Dorsolateral prefrontal cortex (tissue), 120 donors: ENCODE measurements at regions of chr1 and their contacts with region 1.

Region 1: DNA sequence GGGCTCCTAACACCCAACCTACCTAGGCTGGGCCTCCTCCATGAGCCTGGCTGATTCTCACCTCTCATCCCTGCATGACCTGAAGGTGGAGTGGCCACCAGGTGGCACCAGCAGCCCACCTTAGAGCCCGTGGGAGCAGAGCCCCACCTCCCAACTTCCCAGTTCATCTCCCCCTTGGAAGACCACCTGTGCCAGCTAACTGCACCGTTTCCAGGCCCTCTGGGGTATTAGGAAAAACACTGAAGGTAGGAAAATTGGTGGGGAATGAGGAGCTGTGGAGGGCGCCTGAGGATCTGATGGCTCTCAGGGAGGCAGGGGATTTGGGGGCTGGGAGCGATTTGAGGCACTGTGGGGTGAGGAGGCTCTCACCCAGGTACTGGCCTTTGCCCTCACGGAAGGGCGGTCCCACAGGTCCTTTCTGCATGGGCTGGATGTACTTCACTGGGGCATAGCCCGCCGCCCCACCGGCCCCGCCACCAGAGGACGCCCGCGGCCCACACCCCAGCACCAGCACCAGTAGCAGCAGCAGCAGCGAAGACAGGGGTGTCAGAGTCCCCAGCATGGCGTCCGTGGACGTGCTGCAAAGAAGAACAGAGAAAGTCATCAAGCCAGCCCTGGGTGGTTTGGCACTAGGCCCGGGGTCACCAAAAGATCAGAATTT is 11.1 kb downstream of the ADPRS start:
- DNase-seq: peak in 9 of 10 donors; percentile 68 to 83 (median 75)
- H3K4me3 ChIP-seq: peak overlapping the region in 5 of 59 donors; percentile 3 to 26 (median 12)
- H3K27ac ChIP-seq: peak overlapping the region in 9 of 59 donors; percentile 10 to 92 (median 62)
- H3K27me3 ChIP-seq: no peaks in the 10 kb centered on the region
- CTCF ChIP-seq: peak; percentile 70 to 95 (median 88)

Region 2: DNA sequence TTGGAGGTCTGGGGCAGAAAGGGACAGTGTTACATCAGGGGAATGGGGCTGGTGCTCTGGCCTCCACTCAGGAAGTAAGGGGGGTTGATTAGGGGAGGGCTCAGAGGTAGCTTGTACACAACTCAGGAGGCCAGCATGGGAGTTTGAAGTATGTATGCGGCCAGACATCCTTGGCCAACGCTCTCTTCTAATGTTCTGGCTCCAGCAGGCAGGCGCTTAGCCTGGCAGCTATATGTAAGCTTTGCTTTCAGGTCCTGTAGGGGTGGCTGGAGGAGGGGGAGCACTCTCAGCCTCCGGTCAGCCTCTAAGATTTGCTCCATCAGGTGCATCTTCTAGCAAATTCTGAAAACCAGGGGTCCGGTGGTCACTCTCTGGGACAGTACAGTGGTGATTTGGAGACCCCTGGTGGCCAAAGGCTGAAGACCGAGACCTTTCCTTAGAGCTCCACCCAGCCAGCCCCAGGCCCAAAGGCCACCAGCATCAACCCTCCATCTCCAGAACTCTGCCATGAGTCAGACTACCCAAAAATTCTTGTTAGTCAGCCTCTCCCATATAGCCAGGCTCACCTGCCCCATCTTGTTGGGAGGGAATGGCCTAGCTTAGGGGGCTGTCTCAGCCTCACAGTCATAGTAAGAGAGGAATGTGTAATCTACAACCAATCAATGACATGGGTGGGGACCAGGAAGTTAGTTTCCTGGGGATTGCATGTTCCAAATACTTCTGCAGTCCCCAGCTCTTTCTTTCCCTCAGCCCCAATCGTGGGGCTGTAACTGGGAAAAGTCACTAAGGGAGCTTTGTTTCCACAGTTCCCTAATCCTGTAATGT is 34.9 kb after region 1 on chr1:
- intact Hi-C with region 1: loop called (anchors 1 to 5 kb)
- DNase-seq: peak in 4 of 10 donors; percentile 41 to 64 (median 58)
- H3K4me3 ChIP-seq: no peak overlapping the region
- H3K27ac ChIP-seq: peak overlapping the region in 32 of 59 donors; percentile 5 to 73 (median 42)
- H3K27me3 ChIP-seq: no peaks in the 10 kb centered on the region
- CTCF ChIP-seq: peak; percentile 46 to 88 (median 75)

Region 3: DNA sequence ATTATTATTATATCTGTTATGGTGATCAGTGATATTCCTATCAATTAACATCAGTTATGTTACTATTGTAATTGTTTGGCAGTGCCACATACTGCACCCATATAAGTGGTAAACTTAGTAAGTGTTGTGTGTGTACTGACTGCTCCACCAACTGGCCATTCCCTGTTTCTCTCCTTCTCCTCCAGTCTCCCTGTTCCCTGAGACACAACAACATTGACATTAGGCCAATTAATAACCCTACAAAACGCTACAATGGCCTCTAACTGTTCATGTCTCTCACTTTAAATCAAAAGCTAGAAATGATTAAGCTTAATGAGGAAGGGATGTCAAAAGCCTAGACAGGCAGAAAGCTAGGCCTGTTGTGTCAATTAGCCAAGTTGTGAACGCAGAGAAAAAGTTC is 117.9 kb after region 1 on chr1:
- intact Hi-C with region 1: loop called in 1 of 2 experiments (anchors 5 kb)
- DNase-seq: peak in 3 of 10 donors; percentile 41 to 52 (median 41)
- H3K4me3 ChIP-seq: no peak overlapping the region
- H3K27ac ChIP-seq: peak overlapping the region in 37 of 59 donors; percentile 9 to 79 (median 55)
- H3K27me3 ChIP-seq: no peaks in the 10 kb centered on the region
- CTCF ChIP-seq: peak in 52 of 56 donors; percentile 23 to 76 (median 54)

Region 4: DNA sequence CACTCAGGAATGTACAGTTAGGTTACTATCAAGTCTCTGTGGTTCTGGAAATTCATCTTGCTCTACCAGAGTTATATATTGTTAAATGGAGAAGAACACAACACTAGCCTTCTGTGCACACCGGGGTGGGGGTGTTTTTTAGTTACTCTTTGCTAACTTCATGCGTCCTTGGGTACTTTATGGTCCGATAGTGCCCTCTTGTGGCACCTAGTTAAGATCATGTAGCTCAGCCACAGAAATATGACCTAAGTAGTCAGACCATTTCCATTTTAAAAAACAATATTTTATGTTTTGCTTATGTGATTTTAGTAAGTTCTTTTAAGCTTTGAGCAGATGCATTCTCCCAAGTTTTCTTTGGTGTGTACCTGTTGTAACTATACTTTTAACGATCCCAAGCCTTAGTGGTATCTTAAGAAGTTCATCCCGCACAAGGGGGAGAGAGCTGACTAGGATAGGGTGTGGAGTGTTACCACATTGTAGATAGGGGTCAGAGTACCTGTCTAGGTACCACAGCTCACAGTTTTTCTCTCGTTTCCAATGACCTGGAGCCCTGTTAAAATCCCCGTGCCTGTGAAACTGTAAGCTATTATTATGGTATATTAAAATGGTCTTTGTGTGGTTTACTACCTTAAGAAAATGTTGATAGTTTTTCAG is 185.8 kb after region 1 on chr1:
- intact Hi-C with region 1: loop called in 1 of 2 experiments (anchors 5 kb)
- DNase-seq: peak in 5 of 10 donors; percentile 41 to 84 (median 64)
- H3K4me3 ChIP-seq: no peak overlapping the region
- H3K27ac ChIP-seq: peak overlapping the region in 30 of 59 donors; percentile 0 to 56 (median 22)
- H3K27me3 ChIP-seq: no peaks in the 10 kb centered on the region
- CTCF ChIP-seq: peak; percentile 61 to 89 (median 79)

Region 5: DNA sequence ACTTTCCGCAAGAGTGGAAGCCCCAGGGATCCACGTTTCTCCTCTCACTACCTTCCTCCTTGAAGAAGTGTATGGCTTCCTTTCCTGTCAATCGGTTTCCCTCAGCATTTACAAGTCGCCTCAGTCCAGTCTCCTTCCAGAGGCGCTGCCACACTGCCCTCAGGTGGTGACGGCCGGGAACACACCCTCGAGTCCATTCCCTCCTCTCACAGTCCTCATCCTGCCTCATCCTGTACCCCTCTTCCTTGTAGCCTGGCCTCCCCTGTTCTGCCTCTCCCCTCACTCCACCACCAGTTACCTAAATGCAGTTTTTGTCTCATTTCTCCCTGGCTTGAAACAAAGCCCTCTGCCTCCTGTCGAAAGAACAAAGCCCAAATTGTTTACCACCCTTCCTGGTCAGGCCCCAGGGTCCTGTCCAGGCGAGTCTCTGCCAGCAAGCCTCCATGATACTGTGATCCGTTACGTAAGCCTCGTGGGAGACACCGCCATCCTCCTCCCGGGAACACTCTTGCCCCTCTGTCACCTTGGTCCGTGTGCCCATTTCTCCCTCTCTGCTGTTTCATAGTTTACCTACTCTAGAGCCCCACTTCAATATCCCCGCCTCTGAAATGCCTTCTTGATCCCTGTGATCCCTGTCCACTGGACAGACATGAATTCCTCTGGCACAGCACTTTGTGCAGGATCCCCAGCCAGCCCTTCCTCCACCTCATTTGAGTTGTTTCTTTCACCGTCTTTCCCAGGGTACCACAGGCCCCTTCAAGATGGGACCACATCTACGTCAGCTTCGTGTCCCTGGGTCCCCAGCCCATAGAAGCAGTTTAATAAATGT is 321.2 kb after region 1 on chr1:
- intact Hi-C with region 1: loop called in 1 of 2 experiments (anchors 5 kb)
- DNase-seq: peak; percentile 78 to 94 (median 88)
- H3K4me3 ChIP-seq: no peak overlapping the region
- H3K27ac ChIP-seq: peak overlapping the region in 29 of 59 donors; percentile 3 to 66 (median 44)
- H3K27me3 ChIP-seq: no peaks in the 10 kb centered on the region
- CTCF ChIP-seq: peak; percentile 70 to 97 (median 94)